Cardiac septum (tissue), 1 donor: ENCODE measurements at regions of chr10 and their contacts with region 1.

Region 1: GRCh38 chr10:122342293-122343134 is 32.0 kb upstream of the PLEKHA1 start:
- DNase-seq: no peak

Region 2: GRCh38 chr10:122290831-122291532 is 51.5 kb before region 1 on chr10:
- intact Hi-C with region 1: no loop called
- DNase-seq: no peak

Region 3: GRCh38 chr10:122435212-122435827 is 92.8 kb after region 1 on chr10:
- intact Hi-C with region 1: loop called (anchors 2 kb)
- DNase-seq: no peak

Region 4: DNA sequence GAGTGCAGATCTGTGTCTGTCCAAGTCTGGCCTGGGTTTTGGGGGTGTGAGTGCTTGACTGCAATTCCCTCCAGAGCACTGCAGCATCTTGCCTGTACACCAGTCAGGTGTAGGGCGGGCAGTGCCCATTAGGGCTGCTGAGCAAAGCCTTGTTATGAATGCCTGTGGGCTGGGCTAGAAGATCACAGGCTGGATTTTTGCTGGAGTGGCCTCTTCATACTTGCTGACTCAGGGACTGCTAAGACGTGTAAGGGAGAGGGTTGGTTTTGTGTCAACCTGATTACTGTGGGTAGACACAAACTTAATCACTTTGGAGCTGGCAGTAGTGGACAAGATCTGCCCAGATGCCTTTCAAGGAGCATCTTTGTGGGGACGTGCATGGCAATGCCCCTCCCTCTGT is 247.6 kb after region 1 on chr10:
- intact Hi-C with region 1: no loop called
- DNase-seq: no peak